Posterior vena cava (tissue), 2 donors: ENCODE measurements at regions of chr2 and their contacts with region 1.

Region 1: DNA sequence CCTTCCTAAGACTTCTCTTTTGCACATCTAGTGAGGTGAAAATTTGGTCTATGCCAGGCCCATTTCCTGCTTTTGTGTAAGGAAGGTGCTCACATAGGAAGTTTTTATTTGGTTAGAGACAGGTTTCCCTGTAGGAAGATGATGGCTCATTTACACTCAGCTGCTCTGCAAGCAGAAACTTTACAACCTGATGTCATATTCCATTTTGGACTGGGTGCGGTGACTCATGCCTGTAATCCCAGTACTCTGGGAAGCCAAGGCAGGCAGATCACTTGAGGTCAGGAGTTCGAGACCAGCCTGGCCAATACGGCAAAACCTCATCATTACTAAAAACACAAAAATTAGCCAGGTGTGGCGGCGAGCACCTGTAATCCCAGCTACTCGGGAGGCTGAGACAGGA is 35.8 kb downstream of the CASP10 start:
- DNase-seq: no peak

Region 2: DNA sequence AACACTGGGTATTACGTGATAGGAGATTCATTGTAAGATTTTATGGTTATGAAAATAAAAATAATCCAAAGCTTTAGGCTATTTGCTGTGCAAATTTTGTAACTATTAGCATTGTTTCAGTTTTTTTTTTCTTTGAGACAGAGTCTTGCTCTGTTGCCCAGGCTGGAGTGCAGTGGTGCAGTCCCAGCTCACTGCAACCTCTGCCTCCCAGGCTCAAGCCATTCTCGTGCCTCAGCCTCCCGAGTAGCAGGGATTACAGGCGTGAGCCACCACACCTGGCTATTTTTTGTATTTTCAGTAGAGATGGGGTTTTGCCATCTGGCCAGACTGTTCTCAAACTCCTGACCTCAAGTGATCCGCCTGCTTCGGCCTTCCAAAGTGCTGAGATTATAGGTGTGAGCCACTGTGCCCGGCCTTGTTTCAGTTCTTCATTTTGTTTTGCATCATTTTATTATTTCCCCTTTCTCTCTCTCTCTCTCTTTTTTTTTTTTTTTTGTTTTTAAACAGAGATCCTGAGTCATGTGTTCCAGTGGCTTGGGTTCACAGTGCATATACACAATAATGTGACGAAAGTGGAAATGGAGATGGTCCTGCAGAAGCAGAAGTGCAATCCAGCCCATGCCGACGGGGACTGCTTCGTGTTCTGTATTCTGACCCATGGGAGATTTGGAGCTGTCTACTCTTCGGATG is 10.1 kb before region 1 on chr2:
- intact Hi-C with region 1: loop called in 1 of 2 experiments (anchors 1 kb)
- DNase-seq: no peak